Activated CD4-positive, alpha-beta memory T cell treated with anti-CD3 and anti-CD28 coated beads for 36 hours (primary cell): ENCODE measurements at regions of chr7 and their contacts with region 1.

Region 1: GRCh38 chr7:39948956-39949928 is 814 bp upstream of the CDK13 start:
- DNase-seq: peak; percentile 99
- H3K4me3 Mint-ChIP-seq: peak overlapping the region; percentile 100
- H3K27ac Mint-ChIP-seq: peak overlapping the region; percentile 100
- H3K4me1 Mint-ChIP-seq: peaks cover 29% of the 10 kb centered on the region
- H3K27me3 Mint-ChIP-seq: peaks cover 5% of the 10 kb centered on the region

Region 2: GRCh38 chr7:39566023-39566921 is 383.0 kb before region 1 on chr7 and contains the start of gene YAE1:
- CTCF ChIA-PET with region 1: no interaction called
- POLR2A ChIA-PET with region 1: no interaction called
- intact Hi-C with region 1: loop called (anchors 2 kb)
- DNase-seq: peak; percentile 88
- H3K4me3 Mint-ChIP-seq: peak within 1 kb of the TSS; percentile 98
- H3K27ac Mint-ChIP-seq: peak within 1 kb of the TSS; percentile 92
- H3K4me1 Mint-ChIP-seq: peaks cover 17% of the 10 kb centered on the region
- H3K27me3 Mint-ChIP-seq: no peaks in the 10 kb centered on the region
- total RNA-seq, gene YAE1: 7.3 to 8.8 TPM

Region 3: DNA sequence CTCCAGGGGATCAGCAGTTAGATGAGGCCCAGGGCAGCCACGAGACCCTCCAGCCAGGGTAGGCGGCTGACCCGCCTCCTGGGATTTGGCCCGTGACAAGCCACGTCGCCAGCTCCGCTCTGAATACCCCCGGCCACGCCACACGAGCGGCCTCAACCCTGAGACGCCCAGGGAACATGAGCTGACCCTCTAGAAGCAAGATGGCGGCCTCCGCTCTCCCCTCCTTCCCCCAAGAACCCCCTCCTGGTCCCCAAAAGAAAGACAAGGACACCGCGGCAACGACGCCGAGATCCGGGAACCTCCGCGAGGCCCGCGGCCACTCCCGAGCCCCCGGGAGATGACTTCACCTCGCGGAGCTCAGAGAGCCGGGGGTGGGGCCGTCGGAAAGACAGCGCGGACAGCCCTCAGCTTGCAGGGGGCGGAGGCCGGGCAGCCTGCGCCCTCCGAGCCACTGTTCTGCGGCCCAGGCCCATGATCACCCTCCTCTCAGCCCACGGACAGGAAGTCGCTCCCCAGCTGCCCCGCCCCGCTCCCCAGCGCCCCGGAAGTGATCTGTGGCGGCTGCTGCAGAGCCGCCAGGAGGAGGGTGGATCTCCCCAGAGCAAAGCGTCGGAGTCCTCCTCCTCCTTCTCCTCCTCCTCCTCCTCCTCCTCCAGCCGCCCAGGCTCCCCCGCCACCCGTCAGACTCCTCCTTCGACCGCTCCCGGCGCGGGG is 326.1 kb before region 1 on chr7 and contains the start of gene RALA:
- CTCF ChIA-PET with region 1: no interaction called
- POLR2A ChIA-PET with region 1: no interaction called
- intact Hi-C with region 1: loop called (anchors 1 kb)
- DNase-seq: peak; percentile 94
- H3K4me3 Mint-ChIP-seq: peak within 1 kb of the TSS; percentile 90
- H3K27ac Mint-ChIP-seq: peak within 1 kb of the TSS; percentile 87
- H3K4me1 Mint-ChIP-seq: peaks cover 45% of the 10 kb centered on the region
- H3K27me3 Mint-ChIP-seq: no peaks in the 10 kb centered on the region
- total RNA-seq, gene RALA: 27.1 to 31.4 TPM

Region 4: GRCh38 chr7:39894904-39895303 is 54.3 kb before region 1 on chr7:
- CTCF ChIA-PET with region 1: interaction called, 11 read pairs
- POLR2A ChIA-PET with region 1: no interaction called
- intact Hi-C with region 1: loop called (anchors 2 kb)
- DNase-seq: no peak
- H3K4me3 Mint-ChIP-seq: no peak overlapping the region
- H3K27ac Mint-ChIP-seq: no peak overlapping the region
- H3K4me1 Mint-ChIP-seq: no peaks in the 10 kb centered on the region
- H3K27me3 Mint-ChIP-seq: peaks cover 2% of the 10 kb centered on the region

Region 5: GRCh38 chr7:39987476-39988347 is 38.5 kb after region 1 on chr7:
- CTCF ChIA-PET with region 1: no interaction called
- POLR2A ChIA-PET with region 1: interaction called, 3 read pairs
- intact Hi-C with region 1: loop called (anchors 1 kb)
- DNase-seq: no peak
- H3K4me3 Mint-ChIP-seq: no peak overlapping the region
- H3K27ac Mint-ChIP-seq: peak overlapping the region; percentile 53
- H3K4me1 Mint-ChIP-seq: peaks cover 44% of the 10 kb centered on the region
- H3K27me3 Mint-ChIP-seq: no peaks in the 10 kb centered on the region

Region 6: GRCh38 chr7:40008223-40008815 is 59.1 kb after region 1 on chr7:
- CTCF ChIA-PET with region 1: no interaction called
- POLR2A ChIA-PET with region 1: no interaction called
- intact Hi-C with region 1: no loop called
- DNase-seq: no peak
- H3K4me3 Mint-ChIP-seq: no peak overlapping the region
- H3K27ac Mint-ChIP-seq: peak overlapping the region; percentile 18
- H3K4me1 Mint-ChIP-seq: peaks cover 18% of the 10 kb centered on the region
- H3K27me3 Mint-ChIP-seq: no peaks in the 10 kb centered on the region

Region 7: GRCh38 chr7:40057292-40057691 is 108.0 kb after region 1 on chr7:
- CTCF ChIA-PET with region 1: interaction called, 46 read pairs
- POLR2A ChIA-PET with region 1: no interaction called
- intact Hi-C with region 1: loop called (anchors 1 kb)
- DNase-seq: no peak
- H3K4me3 Mint-ChIP-seq: no peak overlapping the region
- H3K27ac Mint-ChIP-seq: no peak overlapping the region
- H3K4me1 Mint-ChIP-seq: peaks cover 3% of the 10 kb centered on the region
- H3K27me3 Mint-ChIP-seq: no peaks in the 10 kb centered on the region